Mammary epithelial cell (primary cell): ENCODE measurements at regions of chr10 and their contacts with region 1.

Region 1: DNA sequence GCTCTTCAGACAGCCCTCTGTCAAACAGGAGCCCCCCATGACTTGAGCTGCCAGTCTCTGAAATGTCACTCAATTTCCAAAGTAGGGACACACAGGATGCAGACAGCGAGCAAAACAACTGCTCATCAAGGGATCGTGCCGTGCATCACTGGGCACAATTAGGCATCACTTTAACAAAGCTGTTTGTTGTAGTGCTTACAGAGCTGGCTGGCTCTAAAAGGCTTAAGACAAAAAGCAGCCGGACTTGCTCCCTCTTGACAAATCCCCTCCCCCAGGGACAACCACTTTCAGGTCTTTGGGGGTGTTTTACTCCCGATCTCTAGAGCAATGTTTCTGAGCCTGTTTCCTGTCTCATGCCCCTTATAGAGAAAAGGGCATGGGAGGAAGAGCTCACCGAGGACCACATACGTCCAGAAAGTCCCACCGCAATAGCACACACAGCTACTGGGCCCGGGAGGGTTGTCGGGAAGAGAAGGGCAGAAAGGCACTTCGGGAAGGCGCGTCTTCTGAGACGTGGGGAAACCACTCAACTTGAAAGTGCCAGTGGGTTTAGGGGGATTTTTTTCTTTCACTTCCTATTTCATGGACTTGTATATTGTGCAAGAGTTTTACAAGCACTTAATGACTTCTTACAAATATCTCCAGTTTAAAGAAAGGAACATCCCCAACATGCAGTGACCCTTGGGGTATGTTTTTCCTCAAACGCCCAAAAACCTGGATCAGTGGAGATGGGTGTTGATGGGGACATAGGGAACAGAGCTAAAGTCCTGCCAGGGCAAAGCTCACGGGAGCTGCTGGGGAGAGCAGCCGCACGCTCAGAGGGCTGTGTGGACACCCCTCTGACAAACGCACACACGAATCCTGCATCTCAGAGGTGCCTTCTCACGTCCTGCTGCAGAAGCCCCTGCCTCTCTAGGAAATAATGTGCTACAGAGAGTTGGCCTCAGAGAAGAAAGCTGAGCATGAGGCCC is 27.1 kb downstream of the LRRC20 start:
- DNase-seq: no peak
- H3K4me3 ChIP-seq: no peak overlapping the region
- H3K27ac ChIP-seq: no peak overlapping the region
- H3K4me1 ChIP-seq: no peaks in the 10 kb centered on the region
- H3K27me3 ChIP-seq: no peaks in the 10 kb centered on the region
- CTCF ChIP-seq: no peak

Region 2: GRCh38 chr10:70247360-70247759 is 108.0 kb before region 1 on chr10:
- CTCF ChIA-PET with region 1: no interaction called
- dilution Hi-C with region 1: loop called (anchors 10 kb)
- in situ Hi-C with region 1: no loop called
- intact Hi-C with region 1: no loop called
- DNase-seq: no peak
- H3K4me3 ChIP-seq: no peak overlapping the region
- H3K27ac ChIP-seq: no peak overlapping the region
- H3K4me1 ChIP-seq: no peaks in the 10 kb centered on the region
- H3K27me3 ChIP-seq: no peaks in the 10 kb centered on the region
- CTCF ChIP-seq: no peak

Region 3: DNA sequence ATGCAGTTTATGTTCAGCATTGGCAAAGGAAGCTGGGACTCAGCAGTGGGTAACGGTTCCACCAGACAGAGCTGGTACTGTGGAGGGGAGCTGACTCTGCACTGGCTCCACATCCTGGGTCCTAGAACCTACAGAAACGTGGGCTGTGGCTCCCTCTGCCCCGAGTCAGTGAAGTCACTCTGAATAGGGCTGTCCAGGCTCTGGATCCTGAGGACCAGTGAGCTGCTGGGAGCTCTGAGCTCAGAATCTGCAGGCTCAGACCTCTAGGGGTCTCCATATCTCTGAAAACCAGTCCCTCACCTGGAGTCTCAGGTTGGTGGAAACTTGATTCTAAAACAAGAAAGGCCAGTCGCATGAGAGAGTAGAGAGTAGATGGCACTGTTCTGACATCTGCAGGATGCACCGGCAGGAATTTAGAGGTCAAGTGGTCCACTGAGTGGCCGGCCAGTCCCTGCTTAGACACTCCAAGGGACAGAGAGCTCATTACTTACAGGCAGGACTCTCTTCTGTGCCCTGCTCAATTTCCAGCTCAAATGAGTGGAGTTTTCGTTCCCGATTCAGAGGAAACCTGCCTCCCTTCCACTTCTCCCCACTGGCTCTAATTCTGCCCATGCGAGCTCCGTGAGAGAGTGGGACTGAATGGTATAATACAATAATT is 90.2 kb before region 1 on chr10:
- CTCF ChIA-PET with region 1: no interaction called
- dilution Hi-C with region 1: no loop called
- in situ Hi-C with region 1: no loop called
- intact Hi-C with region 1: no loop called
- DNase-seq: peak; percentile 39
- H3K4me3 ChIP-seq: no peak overlapping the region
- H3K27ac ChIP-seq: no peak overlapping the region
- H3K4me1 ChIP-seq: peaks cover 26% of the 10 kb centered on the region
- H3K27me3 ChIP-seq: no peaks in the 10 kb centered on the region
- CTCF ChIP-seq: peak; percentile 14 to 44

Region 4: GRCh38 chr10:70296406-70296899 is 58.9 kb before region 1 on chr10:
- CTCF ChIA-PET with region 1: no interaction called
- dilution Hi-C with region 1: loop called (anchors 10 kb)
- in situ Hi-C with region 1: no loop called
- intact Hi-C with region 1: no loop called
- DNase-seq: peak; percentile 73
- H3K4me3 ChIP-seq: no peak overlapping the region
- H3K27ac ChIP-seq: no peak overlapping the region
- H3K4me1 ChIP-seq: peaks cover 15% of the 10 kb centered on the region
- H3K27me3 ChIP-seq: no peaks in the 10 kb centered on the region
- CTCF ChIP-seq: no peak

Region 5: GRCh38 chr10:70508912-70509756 is 153.8 kb after region 1 on chr10:
- CTCF ChIA-PET with region 1: no interaction called
- dilution Hi-C with region 1: no loop called
- in situ Hi-C with region 1: no loop called
- intact Hi-C with region 1: no loop called
- DNase-seq: no peak
- H3K4me3 ChIP-seq: no peak overlapping the region
- H3K27ac ChIP-seq: no peak overlapping the region
- H3K4me1 ChIP-seq: no peaks in the 10 kb centered on the region
- H3K27me3 ChIP-seq: peaks cover 8% of the 10 kb centered on the region
- CTCF ChIP-seq: no peak